ENCODE measurements at regions of chr20 and their contacts with region 1.

Region 1: GRCh38 chr20:3115190-3116107 is 30.9 kb upstream of the AVP start:
- DNase-seq: no peak
- H3K4me3 ChIP-seq: no peak overlapping the region
- H3K27ac ChIP-seq: no peak overlapping the region
- H3K4me1 ChIP-seq: no peaks in the 10 kb centered on the region
- H3K27me3 ChIP-seq: no peaks in the 10 kb centered on the region
- CTCF ChIP-seq: peak; percentile 69 to 80 (median 77)
- EP300 ChIP-seq: no peak
- POLR2A ChIP-seq: no peak

Region 2: DNA sequence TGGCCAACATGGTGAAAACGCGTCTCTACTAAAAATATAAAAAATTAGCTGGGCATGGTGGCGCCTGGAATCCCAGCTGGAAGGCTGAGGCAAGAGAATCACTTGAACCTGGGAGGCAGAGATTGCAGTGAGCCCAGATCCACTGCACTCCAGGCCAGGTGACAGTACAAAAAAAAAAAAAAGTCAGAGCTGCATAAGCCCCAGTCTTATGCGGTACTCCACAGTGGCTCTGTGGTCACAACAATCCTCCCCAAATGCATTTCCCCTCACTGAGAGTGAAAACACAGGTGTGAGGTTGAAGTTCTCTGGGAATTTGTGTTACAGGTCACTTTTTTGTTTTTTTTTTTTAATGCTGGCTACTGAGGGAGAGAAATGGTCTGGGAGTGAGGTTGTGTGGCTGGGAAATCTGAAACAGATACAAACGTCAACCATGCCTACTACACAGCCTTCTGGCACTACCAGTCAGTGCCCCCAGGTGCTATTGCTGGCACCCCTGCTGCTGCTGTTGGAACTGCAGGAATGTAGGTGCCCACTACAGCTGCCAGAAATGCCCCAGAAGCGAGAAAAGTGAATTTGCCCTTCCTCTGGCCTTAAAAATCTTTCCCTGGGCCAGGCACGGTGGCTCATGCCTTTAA is 63.9 kb before region 1 on chr20:
- in situ Hi-C with region 1: loop called in 1 of 4 experiments (anchors 10 kb)
- intact Hi-C with region 1: loop called (anchors 10 kb)
- DNase-seq: no peak
- H3K4me3 ChIP-seq: no peak overlapping the region
- H3K27ac ChIP-seq: no peak overlapping the region
- H3K4me1 ChIP-seq: peaks cover 8 to 13% (median 10%) of the 10 kb centered on the region in 4 donors
- H3K27me3 ChIP-seq: no peaks in the 10 kb centered on the region
- CTCF ChIP-seq: no peak
- EP300 ChIP-seq: no peak
- POLR2A ChIP-seq: no peak

Region 3: DNA sequence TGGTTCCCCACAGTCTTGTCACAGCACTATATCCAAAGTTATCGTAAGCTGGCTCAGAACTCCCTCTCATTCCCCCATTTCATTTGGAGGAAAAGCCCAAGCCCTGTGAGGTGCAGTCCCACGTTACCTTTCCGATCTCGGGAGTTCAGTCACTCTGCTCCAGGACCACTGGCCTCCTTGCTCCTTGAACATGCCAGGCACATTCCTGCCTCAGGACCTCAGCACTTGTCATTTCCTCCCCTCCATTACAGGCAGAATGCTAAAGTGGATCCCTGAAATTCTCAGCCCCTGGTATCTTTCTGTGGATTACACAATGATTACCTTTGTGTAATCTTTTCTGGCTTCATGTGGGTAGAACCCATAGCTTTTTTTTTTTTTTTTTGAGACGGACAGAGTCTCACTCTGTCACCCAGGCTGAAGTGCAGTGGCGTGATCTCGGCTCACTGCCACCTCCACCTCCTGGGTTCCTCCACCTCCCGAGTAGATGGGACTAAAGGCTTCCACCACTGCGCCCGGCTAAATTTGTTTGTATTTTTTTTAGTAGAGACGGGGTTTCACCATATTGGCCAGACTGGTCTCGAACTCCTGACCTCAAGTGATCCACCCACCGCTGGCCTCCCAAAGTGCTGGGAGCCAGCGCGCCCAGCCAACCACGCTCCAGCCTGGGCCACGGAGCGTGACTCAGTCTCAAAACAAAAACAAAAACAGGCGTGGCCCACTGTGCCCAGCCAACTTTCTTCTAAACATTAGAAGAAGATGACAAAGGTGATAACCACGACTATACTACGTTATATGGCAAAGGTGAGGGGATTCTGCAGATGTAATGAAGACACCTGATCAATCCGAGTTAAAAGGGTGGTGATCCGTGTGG is 48.1 kb before region 1 on chr20:
- in situ Hi-C with region 1: no loop called
- intact Hi-C with region 1: no loop called
- DNase-seq: no peak
- H3K4me3 ChIP-seq: no peak overlapping the region
- H3K27ac ChIP-seq: no peak overlapping the region
- H3K4me1 ChIP-seq: peaks cover 0 to 11% (median 8%) of the 10 kb centered on the region in 4 donors
- H3K27me3 ChIP-seq: peaks cover 20% of the 10 kb centered on the region
- CTCF ChIP-seq: no peak
- EP300 ChIP-seq: no peak
- POLR2A ChIP-seq: no peak

Measured in transverse colon (tissue), 4 donors.